SK-N-SH (cell line): ENCODE measurements at regions of chr6 and their contacts with region 1.

Region 1: DNA sequence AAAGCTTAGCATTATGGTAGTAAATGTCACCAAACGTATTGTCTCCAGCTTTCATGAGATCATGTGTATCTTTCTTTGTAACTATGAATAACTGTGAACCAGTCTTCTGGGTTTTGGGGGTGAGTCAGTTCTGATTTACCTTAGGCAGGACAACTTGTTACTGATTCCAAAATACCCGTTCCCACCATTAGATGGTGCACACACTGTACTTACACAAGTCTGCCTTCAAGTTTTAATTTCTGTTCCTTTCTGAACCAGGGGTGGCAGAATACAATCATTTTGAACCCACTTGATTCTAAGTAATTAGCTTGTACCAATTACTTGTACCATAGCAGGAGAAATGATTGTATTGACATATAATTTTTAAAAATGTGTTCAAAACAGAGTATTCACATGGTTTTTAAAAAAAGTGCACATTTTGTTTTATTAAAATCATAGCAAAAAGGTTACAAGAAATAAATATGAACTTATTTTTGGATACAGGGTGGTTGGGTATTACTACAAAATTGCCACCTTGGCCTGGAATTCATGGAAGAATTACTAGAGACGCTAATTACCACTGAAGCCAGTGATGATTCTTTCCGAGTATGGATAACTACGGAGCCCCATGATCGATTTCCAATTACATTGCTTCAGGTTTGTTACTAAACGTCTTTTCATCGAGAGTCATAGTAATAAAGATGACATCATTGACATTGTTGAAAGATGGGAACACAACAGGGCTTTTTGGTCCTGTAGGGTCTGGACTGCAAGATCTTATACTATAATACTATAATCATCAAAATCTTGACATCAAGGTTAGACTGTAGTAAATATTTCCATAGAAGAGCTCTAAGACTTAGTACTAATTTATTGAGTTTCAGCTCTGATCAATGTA is 75.2 kb upstream of the GLP1R start:
- DNase-seq: peak; percentile 64
- H3K4me3 ChIP-seq: no peak overlapping the region
- H3K27ac ChIP-seq: no peak overlapping the region
- H3K4me1 ChIP-seq: peaks cover 0 to 16% of the 10 kb centered on the region in 2 experiments; a peak in 2 of 4 replicates
- H3K27me3 ChIP-seq: no peaks in the 10 kb centered on the region
- CTCF ChIP-seq: peak; percentile 62
- EP300 ChIP-seq: no peak
- RAD21 ChIP-seq: peak; percentile 81

Region 2: DNA sequence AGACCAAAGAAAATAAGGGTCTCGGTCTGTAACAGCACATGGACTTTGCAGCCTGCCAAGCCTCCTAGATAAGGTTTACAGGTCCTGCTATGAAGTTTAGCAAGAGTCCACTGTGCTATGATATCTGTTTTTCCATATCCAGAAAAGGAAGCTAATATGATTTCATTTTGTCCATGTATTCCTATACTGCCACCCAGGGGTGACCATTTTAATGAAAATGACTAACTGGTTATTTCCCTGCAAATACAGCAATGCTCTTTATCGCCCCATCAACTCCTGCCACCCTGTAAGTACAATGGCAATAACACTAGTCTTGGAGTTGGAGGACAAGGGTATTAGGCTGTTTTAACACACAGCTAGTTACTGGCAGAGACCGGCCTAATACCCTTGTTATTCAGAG is 40.0 kb before region 1 on chr6:
- CTCF ChIA-PET with region 1: no interaction called
- POLR2A ChIA-PET with region 1: no interaction called
- DNase-seq: peak; percentile 27
- H3K4me3 ChIP-seq: no peak overlapping the region
- H3K27ac ChIP-seq: no peak overlapping the region
- H3K4me1 ChIP-seq: peaks cover 0 to 5% of the 10 kb centered on the region in 2 experiments; a peak in 2 of 4 replicates
- H3K27me3 ChIP-seq: no peaks in the 10 kb centered on the region; the same call in 1 of the 2 replicates
- CTCF ChIP-seq: peak; percentile 47
- EP300 ChIP-seq: no peak
- RAD21 ChIP-seq: peak; percentile 63

Region 3: DNA sequence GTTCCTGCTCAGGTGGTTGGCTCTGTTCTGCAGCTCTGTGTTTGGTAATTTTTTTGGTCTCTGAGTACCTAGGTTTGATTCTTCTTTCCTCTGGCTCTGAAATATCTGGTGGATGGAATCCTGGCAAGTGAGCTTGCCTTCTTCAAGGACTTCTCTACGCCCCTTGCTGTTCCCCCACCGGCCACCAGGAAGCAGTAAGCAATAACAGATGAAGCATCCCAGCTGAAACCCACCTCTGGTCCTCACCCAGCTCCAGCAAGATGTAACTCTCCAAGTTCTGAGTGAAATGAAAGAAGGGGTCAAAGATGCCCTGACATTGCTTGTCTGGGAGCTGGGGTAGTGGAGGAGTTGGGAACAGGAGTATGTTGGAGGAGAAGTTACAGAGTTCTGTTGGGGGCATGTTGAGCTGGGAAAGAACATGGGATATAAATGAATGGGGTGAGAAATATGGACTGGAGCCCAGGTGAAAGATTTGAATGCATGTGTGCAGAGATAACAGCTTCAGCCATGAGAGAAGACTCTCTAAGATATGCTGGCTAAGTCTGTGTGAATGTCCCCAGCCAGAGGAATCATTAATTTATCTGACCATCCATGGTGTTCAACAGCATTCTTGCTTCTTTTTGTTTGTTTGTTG is 23.8 kb after region 1 on chr6:
- CTCF ChIA-PET with region 1: interaction called, 21 read pairs
- POLR2A ChIA-PET with region 1: no interaction called
- DNase-seq: peak; percentile 49
- H3K4me3 ChIP-seq: no peak overlapping the region
- H3K27ac ChIP-seq: no peak overlapping the region
- H3K4me1 ChIP-seq: no peaks in the 10 kb centered on the region
- H3K27me3 ChIP-seq: no peaks in the 10 kb centered on the region
- CTCF ChIP-seq: peak; percentile 61
- EP300 ChIP-seq: no peak
- RAD21 ChIP-seq: peak; percentile 91

Region 4: DNA sequence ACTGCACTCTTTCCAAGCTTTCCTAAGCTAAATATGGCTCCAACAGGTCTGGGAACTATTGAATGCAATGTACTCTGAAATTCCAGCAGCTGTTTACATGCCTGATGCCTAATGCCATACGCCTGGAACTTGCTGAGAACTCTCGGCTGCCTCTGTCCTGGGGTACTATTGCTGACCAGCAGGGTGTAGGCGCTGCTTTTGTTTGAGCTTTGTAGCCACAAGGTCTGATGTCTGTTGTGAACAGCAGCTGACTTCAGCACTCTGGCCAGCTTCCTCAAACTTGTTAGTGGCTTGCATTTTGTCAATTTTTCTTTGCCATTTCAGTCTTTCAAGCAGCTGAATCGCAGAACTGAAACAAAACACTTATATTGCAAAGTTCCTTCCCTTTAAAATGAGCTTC is 114.9 kb after region 1 on chr6:
- CTCF ChIA-PET with region 1: interaction called, 15 read pairs
- POLR2A ChIA-PET with region 1: no interaction called
- DNase-seq: no peak
- H3K4me3 ChIP-seq: no peak overlapping the region
- H3K27ac ChIP-seq: no peak overlapping the region
- H3K4me1 ChIP-seq: peaks cover 0 to 10% of the 10 kb centered on the region in 2 experiments; a peak in 1 of 4 replicates
- H3K27me3 ChIP-seq: no peaks in the 10 kb centered on the region
- CTCF ChIP-seq: peak; percentile 29
- EP300 ChIP-seq: no peak
- RAD21 ChIP-seq: peak; percentile 27

Region 5: DNA sequence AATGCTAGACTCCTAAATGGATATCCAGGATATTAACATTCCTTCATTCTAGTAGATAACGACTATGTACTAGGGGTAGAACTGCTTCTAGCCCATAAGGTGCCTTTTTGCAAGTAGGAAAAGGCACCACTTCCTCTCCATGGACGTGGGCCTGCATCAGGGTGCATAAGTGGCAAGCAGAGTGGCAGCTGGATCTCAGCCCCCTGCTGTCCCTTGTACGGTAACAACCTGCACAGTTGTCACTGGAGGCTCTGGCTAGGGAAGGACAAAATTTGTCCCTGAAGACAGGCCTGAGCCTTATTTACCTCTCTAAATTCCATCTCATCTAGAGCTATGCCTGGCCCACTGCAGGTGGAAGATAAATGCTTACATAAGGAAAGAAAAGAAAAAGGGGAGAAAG is 184.1 kb after region 1 on chr6:
- CTCF ChIA-PET with region 1: interaction called, 17 read pairs
- POLR2A ChIA-PET with region 1: no interaction called
- DNase-seq: peak; percentile 47
- H3K4me3 ChIP-seq: no peak overlapping the region
- H3K27ac ChIP-seq: no peak overlapping the region
- H3K4me1 ChIP-seq: peaks cover 0 to 5% of the 10 kb centered on the region in 2 experiments; a peak in 2 of 4 replicates
- H3K27me3 ChIP-seq: no peaks in the 10 kb centered on the region
- CTCF ChIP-seq: no peak
- EP300 ChIP-seq: no peak
- RAD21 ChIP-seq: peak; percentile 18; the same call in 1 of the 2 replicates